ENCODE measurements at regions of chr7 and their contacts with region 1.

Region 1: GRCh38 chr7:151368136-151368571 is 26.5 kb downstream of the NUB1 start:
- DNase-seq: peak; percentile 87
- H3K4me3 ChIP-seq: no peak overlapping the region
- H3K27ac ChIP-seq: peak overlapping the region; percentile 43 to 72 (median 61)
- H3K4me1 ChIP-seq: peaks cover 0 to 24% (median 6%) of the 10 kb centered on the region in 4 donors
- H3K27me3 ChIP-seq: no peaks in the 10 kb centered on the region
- CTCF ChIP-seq: peak; percentile 91 to 96 (median 95)
- EP300 ChIP-seq: no peak
- POLR2A ChIP-seq: no peak

Region 2: DNA sequence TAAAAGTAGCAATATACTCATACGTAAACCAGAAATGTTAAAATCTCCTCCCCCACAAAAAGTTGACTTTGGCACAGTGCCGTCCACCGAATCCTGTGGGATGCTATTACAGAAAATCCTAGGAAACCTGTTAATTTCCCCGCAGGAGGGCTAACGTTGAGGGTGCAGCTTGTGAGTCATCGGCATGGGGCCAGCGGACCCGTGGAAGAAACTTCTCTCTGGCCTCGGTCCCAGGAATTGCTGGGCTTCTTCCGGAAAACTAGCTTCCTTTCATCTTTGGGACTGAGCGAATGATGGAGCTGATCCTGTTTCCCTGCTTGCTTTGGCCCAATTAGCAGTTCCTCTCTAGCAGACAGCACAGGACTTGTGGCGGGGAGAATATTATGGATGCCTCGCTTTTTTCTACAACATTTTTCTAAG is 58.3 kb after region 1 on chr7:
- in situ Hi-C with region 1: no loop called
- intact Hi-C with region 1: no loop called
- DNase-seq: peak; percentile 60
- H3K4me3 ChIP-seq: no peak overlapping the region
- H3K27ac ChIP-seq: peak overlapping the region; percentile 63 to 80 (median 76)
- H3K4me1 ChIP-seq: peaks cover 2 to 17% (median 9%) of the 10 kb centered on the region in 4 donors
- H3K27me3 ChIP-seq: no peaks in the 10 kb centered on the region
- CTCF ChIP-seq: no peak
- EP300 ChIP-seq: no peak
- POLR2A ChIP-seq: no peak

Region 3: DNA sequence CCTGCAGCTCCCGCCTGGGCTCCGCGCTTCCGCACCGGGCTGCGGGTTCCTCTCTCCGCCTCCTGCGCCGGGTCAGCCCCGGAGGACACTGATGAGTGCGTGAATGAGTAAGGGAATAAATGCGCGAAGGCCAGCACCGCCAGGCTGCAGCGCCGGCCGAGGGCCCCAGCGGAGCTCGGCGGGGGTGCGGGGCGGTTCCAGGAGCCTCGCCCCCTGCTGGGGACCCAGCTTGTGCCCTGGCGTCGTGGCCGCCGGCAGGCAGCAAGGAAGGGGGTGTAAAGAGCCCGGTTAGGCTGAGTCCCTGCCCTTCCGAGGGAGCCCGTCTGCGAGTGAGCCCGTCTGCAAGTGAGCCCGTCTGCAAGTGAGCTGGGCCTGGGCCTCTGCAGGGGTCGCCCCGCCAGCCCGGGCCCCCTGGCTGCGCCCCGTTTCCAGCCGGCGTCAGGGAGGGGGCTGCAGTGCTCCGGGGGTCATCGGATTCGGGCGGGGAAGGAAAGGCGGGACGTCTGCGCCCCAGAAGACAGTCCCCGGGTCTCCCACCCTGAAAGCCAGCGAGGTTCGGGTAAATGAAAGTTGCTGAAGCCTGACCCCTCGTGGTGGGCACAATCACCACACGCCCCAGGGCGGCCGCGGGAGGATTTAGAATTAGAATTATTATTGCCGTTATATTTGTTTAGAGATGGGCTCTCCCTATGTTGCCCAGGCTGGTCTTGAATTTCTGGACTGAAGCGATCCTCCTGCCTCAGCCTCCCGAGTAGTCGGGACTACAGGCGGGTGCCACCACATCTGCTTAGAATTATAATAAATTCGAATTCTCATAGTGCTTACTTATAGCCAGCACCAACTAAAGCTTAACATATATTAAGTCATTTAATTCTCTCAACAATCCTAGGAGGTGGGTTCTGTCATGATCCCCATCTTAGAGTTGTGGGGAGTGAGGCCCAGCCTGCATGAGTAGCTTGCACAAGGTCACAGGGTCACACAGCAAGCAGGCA is 80.4 kb after region 1 on chr7:
- in situ Hi-C with region 1: loop called in 3 of 4 experiments (anchors 5 to 10 kb)
- intact Hi-C with region 1: loop called (anchors 5 kb)
- DNase-seq: peak; percentile 74
- H3K4me3 ChIP-seq: peak overlapping the region; percentile 35 to 68 (median 44)
- H3K27ac ChIP-seq: peak overlapping the region; percentile 53 to 71 (median 58)
- H3K4me1 ChIP-seq: peaks cover 0 to 11% (median 7%) of the 10 kb centered on the region in 4 donors
- H3K27me3 ChIP-seq: no peaks in the 10 kb centered on the region
- CTCF ChIP-seq: peak; percentile 76 to 80 (median 78)
- EP300 ChIP-seq: no peak
- POLR2A ChIP-seq: no peak

Region 4: GRCh38 chr7:151759591-151760042 is 391.5 kb after region 1 on chr7:
- in situ Hi-C with region 1: loop called in 3 of 4 experiments (anchors 25 kb)
- intact Hi-C with region 1: no loop called
- DNase-seq: peak; percentile 53
- H3K4me3 ChIP-seq: no peak overlapping the region
- H3K27ac ChIP-seq: no peak overlapping the region
- H3K4me1 ChIP-seq: peaks cover 18 to 39% (median 20%) of the 10 kb centered on the region in 4 donors
- H3K27me3 ChIP-seq: no peaks in the 10 kb centered on the region
- CTCF ChIP-seq: peak; percentile 80 to 85 (median 84)
- EP300 ChIP-seq: no peak
- POLR2A ChIP-seq: no peak

Measured in transverse colon (tissue), 4 donors.